Naive thymus-derived CD4-positive, alpha-beta T cell (primary cell): ENCODE measurements at regions of chr1 and their contacts with region 1.

Region 1: GRCh38 chr1:25796811-25797458 is 3.1 kb upstream of the SELENON start:
- DNase-seq: peak; percentile 71 to 89 (median 86)
- ATAC-seq: peak; percentile 76
- H3K4me3 ChIP-seq: peak overlapping the region; percentile 15
- H3K4me3 Mint-ChIP-seq: peak overlapping the region; percentile 58 to 94 (median 81)
- H3K27ac ChIP-seq: peak overlapping the region; percentile 37
- H3K27ac Mint-ChIP-seq: peak overlapping the region; percentile 51 to 98 (median 93)
- H3K4me1 ChIP-seq: peaks cover 32 to 67% of the 10 kb centered on the region in 2 donors
- H3K4me1 Mint-ChIP-seq: peaks cover 30 to 88% (median 74%) of the 10 kb centered on the region in 7 donors
- H3K27me3 ChIP-seq: no peaks in the 10 kb centered on the region
- H3K27me3 Mint-ChIP-seq: peaks cover 0 to 29% (median 0%) of the 10 kb centered on the region in 5 donors

Region 2: GRCh38 chr1:25442178-25442577 is 354.8 kb before region 1 on chr1:
- CTCF ChIA-PET with region 1: no interaction called
- POLR2A ChIA-PET with region 1: no interaction called
- intact Hi-C with region 1: no loop called
- DNase-seq: no peak
- ATAC-seq: no peak
- H3K4me3 ChIP-seq: no peak overlapping the region
- H3K4me3 Mint-ChIP-seq: peak overlapping the region in 2 of 10 donors; percentile 17 to 21
- H3K27ac ChIP-seq: no peak overlapping the region
- H3K27ac Mint-ChIP-seq: peak overlapping the region in 1 of 9 donors; percentile 38
- H3K4me1 ChIP-seq: peaks cover 0 to 4% of the 10 kb centered on the region in 2 donors
- H3K4me1 Mint-ChIP-seq: peaks cover 35 to 68% (median 49%) of the 10 kb centered on the region in 7 donors
- H3K27me3 ChIP-seq: no peaks in the 10 kb centered on the region
- H3K27me3 Mint-ChIP-seq: no peaks in the 10 kb centered on the region

Region 3: DNA sequence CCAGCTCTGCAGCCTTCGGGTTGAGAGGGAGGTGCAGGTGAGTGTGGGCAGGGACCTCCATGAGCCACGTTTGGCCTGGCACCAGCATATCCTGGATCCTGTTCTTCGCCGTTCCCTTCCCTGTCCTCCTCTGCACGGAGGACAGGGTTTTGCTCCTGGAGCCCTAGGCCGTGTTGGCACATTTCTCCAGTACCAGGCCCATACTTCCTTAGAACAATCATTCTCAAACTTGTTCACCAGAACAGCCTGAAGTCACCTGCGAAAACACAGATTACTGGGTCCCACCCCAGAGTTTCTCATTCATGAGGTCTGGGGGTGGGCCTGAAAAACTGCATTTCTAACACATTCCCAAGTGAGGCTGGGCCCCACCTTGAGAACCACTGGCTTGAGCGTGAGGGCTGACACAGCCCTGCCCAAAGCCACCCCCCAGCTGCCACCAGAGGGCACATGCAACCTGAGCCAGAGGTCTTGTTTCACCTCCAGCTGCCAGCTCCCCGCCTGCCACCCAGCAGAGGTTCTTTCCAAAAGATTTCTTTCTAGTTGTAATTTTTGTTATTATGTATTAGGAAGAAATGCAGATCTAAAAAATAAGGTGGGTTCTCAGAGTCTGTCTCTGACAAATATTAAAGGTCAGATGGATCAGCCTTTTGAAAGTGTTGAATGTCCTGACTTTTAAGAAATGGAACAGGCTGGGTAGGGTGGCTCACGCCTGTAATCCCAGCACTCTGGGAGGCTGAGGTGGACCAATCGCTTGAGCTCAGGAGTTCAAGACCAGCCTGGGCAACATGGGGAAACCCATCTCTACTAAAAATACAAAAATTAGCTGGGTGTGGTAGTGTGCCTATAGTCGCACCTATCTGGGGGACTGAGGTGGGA is 293.1 kb before region 1 on chr1:
- CTCF ChIA-PET with region 1: interaction called, 3 read pairs
- POLR2A ChIA-PET with region 1: interaction called, 3 read pairs
- intact Hi-C with region 1: loop called in 1 of 2 experiments (anchors 5 kb)
- DNase-seq: peak; percentile 47 to 82 (median 75)
- ATAC-seq: peak; percentile 95
- H3K4me3 ChIP-seq: no peak overlapping the region
- H3K4me3 Mint-ChIP-seq: peak overlapping the region in 1 of 10 donors; percentile 2
- H3K27ac ChIP-seq: peak overlapping the region; percentile 6
- H3K27ac Mint-ChIP-seq: peak overlapping the region in 8 of 9 donors; percentile 68 to 92 (median 76)
- H3K4me1 ChIP-seq: peaks cover 0 to 20% of the 10 kb centered on the region in 2 donors
- H3K4me1 Mint-ChIP-seq: peaks cover 12 to 39% (median 31%) of the 10 kb centered on the region in 7 donors
- H3K27me3 ChIP-seq: no peaks in the 10 kb centered on the region
- H3K27me3 Mint-ChIP-seq: peaks cover 0 to 6% (median 0%) of the 10 kb centered on the region in 5 donors

Region 4: GRCh38 chr1:25543425-25544242 is 253.3 kb before region 1 on chr1 and contains the start of gene LDLRAP1:
- CTCF ChIA-PET with region 1: interaction called, 3 read pairs
- POLR2A ChIA-PET with region 1: interaction called, 3 read pairs
- intact Hi-C with region 1: loop called (anchors 5 kb)
- DNase-seq: peak in 8 of 9 donors; percentile 28 to 81 (median 52)
- ATAC-seq: peak; percentile 97
- H3K4me3 ChIP-seq: peak within 1 kb of the TSS; percentile 60
- H3K4me3 Mint-ChIP-seq: peak within 1 kb of the TSS; percentile 82 to 98 (median 95)
- H3K27ac ChIP-seq: peak within 1 kb of the TSS; percentile 87
- H3K27ac Mint-ChIP-seq: peak within 1 kb of the TSS; percentile 34 to 97 (median 91)
- H3K4me1 ChIP-seq: peaks cover 35 to 38% of the 10 kb centered on the region in 2 donors
- H3K4me1 Mint-ChIP-seq: peaks cover 26 to 48% (median 39%) of the 10 kb centered on the region in 7 donors
- H3K27me3 ChIP-seq: no peaks in the 10 kb centered on the region
- H3K27me3 Mint-ChIP-seq: peaks cover 0 to 15% (median 0%) of the 10 kb centered on the region in 5 donors
- total RNA-seq, gene LDLRAP1: 28.1 to 364 (median 159) TPM

Region 5: DNA sequence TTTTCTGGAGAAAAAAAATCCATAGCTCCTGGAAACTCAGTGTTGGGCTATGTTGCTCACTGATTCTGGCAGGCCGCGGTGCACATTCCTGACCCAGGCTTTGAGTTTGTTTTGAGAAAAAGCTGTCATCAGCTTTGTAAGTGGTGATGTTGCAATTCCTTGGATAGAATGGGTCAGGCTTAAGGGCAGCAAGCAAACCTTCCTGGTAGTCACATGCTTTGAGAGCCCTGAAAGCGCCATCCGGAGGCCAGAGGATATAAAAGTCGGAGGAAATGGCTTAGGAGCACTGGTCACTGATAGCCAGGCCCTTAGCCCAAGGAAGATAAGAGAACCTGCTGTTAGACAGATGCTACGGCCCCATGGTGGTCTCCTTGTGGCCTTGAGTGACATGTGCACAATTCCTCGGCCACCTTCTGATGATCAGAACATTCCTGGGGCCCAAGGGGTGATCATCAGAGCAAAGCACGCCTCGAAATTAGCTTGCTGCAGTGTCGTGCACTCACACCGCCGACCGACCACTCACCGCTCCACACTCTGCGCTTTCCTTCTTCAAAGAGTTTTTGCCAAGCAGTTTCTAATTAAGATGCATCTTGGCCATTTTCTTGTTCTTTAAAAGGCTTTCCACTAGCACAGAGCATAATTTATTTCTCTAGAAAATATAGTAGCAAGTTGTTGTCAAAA is 101.7 kb before region 1 on chr1:
- CTCF ChIA-PET with region 1: interaction called, 4 read pairs
- POLR2A ChIA-PET with region 1: interaction called, 4 read pairs
- intact Hi-C with region 1: loop called in 1 of 2 experiments (anchors 2 kb)
- DNase-seq: no peak
- ATAC-seq: no peak
- H3K4me3 ChIP-seq: no peak overlapping the region
- H3K4me3 Mint-ChIP-seq: peak overlapping the region in 6 of 10 donors; percentile 1 to 69 (median 38)
- H3K27ac ChIP-seq: no peak overlapping the region
- H3K27ac Mint-ChIP-seq: peak overlapping the region in 8 of 9 donors; percentile 65 to 89 (median 74)
- H3K4me1 ChIP-seq: peaks cover 0 to 63% of the 10 kb centered on the region in 2 donors
- H3K4me1 Mint-ChIP-seq: peaks cover 29 to 88% (median 70%) of the 10 kb centered on the region in 7 donors
- H3K27me3 ChIP-seq: no peaks in the 10 kb centered on the region
- H3K27me3 Mint-ChIP-seq: peaks cover 0 to 53% (median 0%) of the 10 kb centered on the region in 5 donors

Region 6: GRCh38 chr1:25754470-25755181 is 42.3 kb before region 1 on chr1:
- CTCF ChIA-PET with region 1: interaction called, 5 read pairs
- POLR2A ChIA-PET with region 1: interaction called, 10 read pairs
- intact Hi-C with region 1: loop called in 1 of 2 experiments (anchors 1 kb)
- DNase-seq: peak in 7 of 9 donors; percentile 57 to 70 (median 64)
- ATAC-seq: peak; percentile 89
- H3K4me3 ChIP-seq: no peak overlapping the region
- H3K4me3 Mint-ChIP-seq: peak overlapping the region; percentile 2 to 87 (median 69)
- H3K27ac ChIP-seq: peak overlapping the region; percentile 62
- H3K27ac Mint-ChIP-seq: peak overlapping the region in 8 of 9 donors; percentile 92 to 99 (median 96)
- H3K4me1 ChIP-seq: peaks cover 0 to 35% of the 10 kb centered on the region in 2 donors
- H3K4me1 Mint-ChIP-seq: peaks cover 22 to 79% (median 68%) of the 10 kb centered on the region in 7 donors
- H3K27me3 ChIP-seq: no peaks in the 10 kb centered on the region
- H3K27me3 Mint-ChIP-seq: peaks cover 0 to 21% (median 0%) of the 10 kb centered on the region in 5 donors

Region 7: DNA sequence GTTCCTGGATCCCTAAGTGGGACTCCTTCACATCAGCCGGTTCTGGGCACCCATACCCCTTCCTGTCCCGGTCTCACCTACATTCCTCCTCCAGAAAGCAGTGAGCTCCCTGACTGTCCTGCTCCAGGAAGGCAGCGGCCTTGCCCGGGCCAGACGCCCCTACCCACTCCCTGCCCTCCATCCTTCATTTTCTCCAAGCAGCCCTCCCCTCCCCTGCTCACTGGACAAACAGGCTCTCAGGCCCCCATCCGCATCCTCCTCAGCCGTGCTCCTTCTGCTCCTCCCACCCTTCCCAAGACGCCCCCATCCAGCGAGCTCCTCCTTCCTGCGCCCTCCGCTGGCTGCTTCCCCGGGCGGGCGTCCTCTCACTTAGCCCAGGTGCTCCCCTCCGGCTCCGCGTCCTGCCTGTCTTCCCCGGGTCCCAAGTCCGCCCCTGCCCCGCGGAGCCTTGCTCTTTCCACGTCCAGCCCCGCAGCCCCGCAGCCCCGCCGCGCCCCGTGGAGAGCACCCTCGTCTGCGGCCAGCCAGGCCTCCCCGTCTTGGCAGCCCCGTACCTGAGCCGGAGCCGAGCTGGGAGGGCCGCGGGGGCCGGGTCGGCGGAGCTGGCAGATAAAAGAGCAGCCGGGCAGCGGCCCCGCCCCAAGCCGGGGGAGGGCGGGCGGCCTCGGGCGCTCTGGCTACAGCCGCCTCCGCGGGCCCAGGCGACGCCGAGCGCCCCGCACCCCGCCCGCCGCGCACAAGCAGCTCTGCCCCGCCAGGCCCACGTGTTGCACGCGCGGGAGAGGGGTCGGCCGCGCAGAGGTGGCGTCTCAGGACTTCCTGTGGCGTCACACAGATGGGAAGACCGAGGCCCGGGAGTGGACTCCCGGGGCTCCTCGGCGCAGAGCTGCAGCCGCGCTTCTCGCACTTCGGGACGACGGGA is 78.3 kb after region 1 on chr1 and contains the start of gene PAQR7:
- CTCF ChIA-PET with region 1: no interaction called
- POLR2A ChIA-PET with region 1: no interaction called
- intact Hi-C with region 1: no loop called
- DNase-seq: peak; percentile 47 to 74 (median 53)
- ATAC-seq: peak; percentile 89
- H3K4me3 ChIP-seq: peak within 1 kb of the TSS; percentile 64
- H3K4me3 Mint-ChIP-seq: peak within 1 kb of the TSS; percentile 75 to 91 (median 86)
- H3K27ac ChIP-seq: peak within 1 kb of the TSS; percentile 56
- H3K27ac Mint-ChIP-seq: peak within 1 kb of the TSS; percentile 54 to 89 (median 81)
- H3K4me1 ChIP-seq: peaks cover 9 to 11% of the 10 kb centered on the region in 2 donors
- H3K4me1 Mint-ChIP-seq: peaks cover 0 to 16% (median 7%) of the 10 kb centered on the region in 7 donors
- H3K27me3 ChIP-seq: no peaks in the 10 kb centered on the region
- H3K27me3 Mint-ChIP-seq: peaks cover 0 to 23% (median 0%) of the 10 kb centered on the region in 5 donors
- total RNA-seq, gene PAQR7: 3.4 to 6.0 (median 4.0) TPM